Activated B cell treated with CpG ODN at 0.5 μM for 24 hours (primary cell): ENCODE measurements at regions of chr4 and their contacts with region 1.

Region 1: GRCh38 chr4:37977471-37978247 is 17.5 kb downstream of the PTTG2 start:
- DNase-seq: peak; percentile 62
- ATAC-seq: peak; percentile 73
- H3K4me3 Mint-ChIP-seq: peak overlapping the region; percentile 86
- H3K27ac Mint-ChIP-seq: peak overlapping the region; percentile 82
- H3K4me1 Mint-ChIP-seq: peaks cover 57% of the 10 kb centered on the region
- H3K27me3 Mint-ChIP-seq: no peaks in the 10 kb centered on the region
- CTCF ChIP-seq: no peak

Region 2: GRCh38 chr4:37603070-37603468 is 374.6 kb before region 1 on chr4:
- CTCF ChIA-PET with region 1: interaction called, 4 read pairs
- POLR2A ChIA-PET with region 1: no interaction called
- intact Hi-C with region 1: loop called (anchors 1 kb)
- DNase-seq: peak; percentile 59
- ATAC-seq: peak; percentile 84
- H3K4me3 Mint-ChIP-seq: no peak overlapping the region
- H3K27ac Mint-ChIP-seq: no peak overlapping the region
- H3K4me1 Mint-ChIP-seq: peaks cover 3% of the 10 kb centered on the region
- H3K27me3 Mint-ChIP-seq: peaks cover 2% of the 10 kb centered on the region
- CTCF ChIP-seq: peak; percentile 95

Region 3: GRCh38 chr4:37802068-37802666 is 175.5 kb before region 1 on chr4:
- CTCF ChIA-PET with region 1: interaction called, 5 read pairs
- POLR2A ChIA-PET with region 1: no interaction called
- intact Hi-C with region 1: loop called (anchors 1 kb)
- DNase-seq: no peak
- ATAC-seq: no peak
- H3K4me3 Mint-ChIP-seq: no peak overlapping the region
- H3K27ac Mint-ChIP-seq: no peak overlapping the region
- H3K4me1 Mint-ChIP-seq: peaks cover 4% of the 10 kb centered on the region
- H3K27me3 Mint-ChIP-seq: peaks cover 1% of the 10 kb centered on the region
- CTCF ChIP-seq: no peak

Region 4: DNA sequence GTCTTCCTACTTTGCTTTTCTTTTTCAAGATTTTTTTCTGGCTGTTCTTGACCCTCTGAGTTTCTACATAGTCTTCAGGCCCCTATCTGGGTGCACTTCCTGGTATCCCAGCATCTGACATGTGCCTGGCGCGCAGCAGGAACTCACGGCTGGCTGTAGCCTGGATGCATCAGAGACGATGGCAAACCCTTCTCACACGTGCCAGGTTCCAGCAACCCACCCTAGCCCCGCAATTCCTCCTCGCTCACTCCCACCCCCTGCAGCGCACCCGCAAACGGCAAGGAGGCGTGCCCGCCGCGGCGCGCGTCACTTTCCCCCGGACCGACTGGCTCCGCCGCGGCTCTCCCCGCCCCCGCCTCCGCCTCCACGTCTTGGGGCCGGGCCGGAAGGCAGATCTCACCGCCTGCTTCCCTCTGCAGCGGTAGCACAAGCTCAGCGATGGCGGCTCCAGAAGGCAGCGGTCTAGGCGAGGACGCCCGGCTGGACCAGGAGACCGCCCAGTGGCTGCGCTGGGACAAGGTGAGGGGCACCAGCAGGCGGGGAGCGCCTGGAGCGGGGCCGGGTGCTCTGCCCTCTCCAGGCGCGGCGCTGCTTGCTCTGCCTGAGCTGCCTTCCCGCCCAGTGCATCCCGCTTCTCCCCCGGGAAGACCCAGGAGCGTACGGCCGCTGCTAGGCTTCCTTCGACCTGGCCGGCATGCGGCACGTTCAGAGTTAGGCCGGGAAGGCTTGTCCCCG is 151.2 kb before region 1 on chr4 and contains the start of gene PGM2:
- CTCF ChIA-PET with region 1: interaction called, 8 read pairs
- POLR2A ChIA-PET with region 1: interaction called, 7 read pairs
- intact Hi-C with region 1: loop called (anchors 1 kb)
- DNase-seq: peak; percentile 91
- ATAC-seq: peak; percentile 96
- H3K4me3 Mint-ChIP-seq: peak within 1 kb of the TSS; percentile 100
- H3K27ac Mint-ChIP-seq: peak within 1 kb of the TSS; percentile 98
- H3K4me1 Mint-ChIP-seq: peaks cover 27% of the 10 kb centered on the region
- H3K27me3 Mint-ChIP-seq: no peaks in the 10 kb centered on the region
- CTCF ChIP-seq: no peak
- total RNA-seq, gene PGM2: 26.4 and 29.6 TPM in 2 replicates

Region 5: GRCh38 chr4:37922328-37922727 is 55.3 kb before region 1 on chr4:
- CTCF ChIA-PET with region 1: no interaction called
- POLR2A ChIA-PET with region 1: no interaction called
- intact Hi-C with region 1: no loop called
- DNase-seq: no peak
- ATAC-seq: no peak
- H3K4me3 Mint-ChIP-seq: no peak overlapping the region
- H3K27ac Mint-ChIP-seq: no peak overlapping the region
- H3K4me1 Mint-ChIP-seq: peaks cover 10% of the 10 kb centered on the region
- H3K27me3 Mint-ChIP-seq: no peaks in the 10 kb centered on the region
- CTCF ChIP-seq: no peak

Region 6: DNA sequence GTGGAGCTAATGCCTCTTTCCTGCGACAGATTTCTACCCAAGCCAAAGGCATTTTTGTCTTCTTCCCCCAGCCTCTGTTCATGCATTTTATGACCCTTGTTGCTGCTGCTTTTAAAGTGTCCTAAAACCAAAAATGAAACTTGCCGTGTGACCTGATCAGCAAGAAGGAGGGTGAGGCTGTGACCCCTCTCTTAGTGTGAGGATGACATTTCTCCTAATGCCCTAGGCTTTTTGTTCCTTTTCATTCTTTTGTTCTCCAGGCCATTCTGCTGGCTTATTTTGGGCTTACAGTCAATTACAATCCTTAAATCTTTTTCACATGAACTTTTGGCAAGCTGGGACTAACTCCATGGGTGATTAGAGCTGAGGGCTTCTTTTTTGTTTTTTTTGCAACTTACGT is 16.9 kb after region 1 on chr4:
- CTCF ChIA-PET with region 1: interaction called, 3 read pairs
- POLR2A ChIA-PET with region 1: no interaction called
- intact Hi-C with region 1: loop called (anchors 1 kb)
- DNase-seq: no peak
- ATAC-seq: no peak
- H3K4me3 Mint-ChIP-seq: no peak overlapping the region
- H3K27ac Mint-ChIP-seq: peak overlapping the region; percentile 15
- H3K4me1 Mint-ChIP-seq: peaks cover 69% of the 10 kb centered on the region
- H3K27me3 Mint-ChIP-seq: no peaks in the 10 kb centered on the region
- CTCF ChIP-seq: no peak